ENCODE measurements at regions of chr19 and their contacts with region 1.

Region 1: DNA sequence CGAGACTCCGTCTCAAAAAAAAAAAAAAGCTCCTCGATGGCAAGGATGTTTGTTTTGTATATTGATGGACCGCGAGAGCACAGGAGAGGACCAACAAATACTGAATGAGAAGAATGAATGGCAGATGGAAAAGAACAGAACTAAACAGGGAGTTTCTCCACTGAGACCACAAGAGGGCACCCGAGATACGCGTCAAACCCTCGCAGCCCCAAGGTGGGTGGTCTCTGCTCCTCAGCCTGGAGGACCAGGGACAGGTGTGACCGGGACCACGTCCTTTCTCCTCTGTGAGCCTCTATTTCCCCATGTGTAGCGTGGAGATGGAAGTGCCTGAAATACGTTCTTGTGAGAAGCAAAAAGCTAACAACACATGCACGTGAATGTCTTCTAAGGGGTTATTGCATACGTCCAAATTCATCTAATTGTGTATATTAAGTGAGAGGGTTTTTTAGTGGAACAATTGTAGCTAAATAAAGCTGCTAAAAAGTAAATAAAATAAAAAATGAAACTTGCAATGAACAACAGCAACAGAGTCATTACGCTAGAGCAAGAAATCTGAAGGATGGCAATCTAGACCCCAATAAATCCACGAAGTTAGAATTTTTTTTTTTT is 8.3 kb upstream of the CDC42EP5 start:
- DNase-seq: peak; percentile 66
- CTCF ChIP-seq: peak; percentile 78

Region 2: DNA sequence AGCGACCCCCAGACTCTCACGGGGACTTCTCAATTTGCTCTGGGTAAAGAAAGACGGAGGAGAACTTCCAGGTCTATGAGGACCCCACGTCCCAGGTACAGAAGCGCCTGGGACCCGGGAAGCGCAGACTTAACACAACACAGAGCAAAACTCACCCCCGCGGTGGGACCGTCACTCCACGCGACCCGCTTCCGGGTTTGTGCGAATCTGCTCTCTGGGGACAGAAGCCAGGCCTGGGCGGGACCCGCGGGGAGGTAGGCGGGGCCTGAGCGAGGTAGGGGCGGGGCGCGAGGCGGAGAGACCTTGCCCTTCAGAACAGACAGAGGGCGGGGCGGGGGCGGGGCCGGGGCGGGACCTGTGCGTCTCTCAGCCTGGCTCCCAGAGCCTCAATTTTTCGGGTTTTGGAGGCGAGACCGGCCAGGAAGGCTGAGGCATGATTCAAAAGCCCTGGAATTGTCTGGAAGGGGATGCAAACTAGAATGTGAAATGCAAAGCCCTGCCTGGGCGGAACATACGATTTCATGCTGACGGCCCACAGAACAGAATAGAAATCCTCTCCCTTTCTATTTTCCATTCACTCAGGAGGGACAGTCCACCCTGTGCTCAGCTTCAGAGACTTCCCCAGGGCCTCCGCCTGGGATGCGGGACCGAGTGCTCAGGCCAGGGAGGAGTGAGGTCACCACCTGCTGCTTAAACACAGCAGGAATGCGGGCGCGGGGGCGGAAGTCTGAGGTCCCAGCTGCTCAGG is 1538.9 kb before region 1 on chr19:
- in situ Hi-C with region 1: no loop called
- DNase-seq: peak; percentile 94
- CTCF ChIP-seq: no peak

Region 3: DNA sequence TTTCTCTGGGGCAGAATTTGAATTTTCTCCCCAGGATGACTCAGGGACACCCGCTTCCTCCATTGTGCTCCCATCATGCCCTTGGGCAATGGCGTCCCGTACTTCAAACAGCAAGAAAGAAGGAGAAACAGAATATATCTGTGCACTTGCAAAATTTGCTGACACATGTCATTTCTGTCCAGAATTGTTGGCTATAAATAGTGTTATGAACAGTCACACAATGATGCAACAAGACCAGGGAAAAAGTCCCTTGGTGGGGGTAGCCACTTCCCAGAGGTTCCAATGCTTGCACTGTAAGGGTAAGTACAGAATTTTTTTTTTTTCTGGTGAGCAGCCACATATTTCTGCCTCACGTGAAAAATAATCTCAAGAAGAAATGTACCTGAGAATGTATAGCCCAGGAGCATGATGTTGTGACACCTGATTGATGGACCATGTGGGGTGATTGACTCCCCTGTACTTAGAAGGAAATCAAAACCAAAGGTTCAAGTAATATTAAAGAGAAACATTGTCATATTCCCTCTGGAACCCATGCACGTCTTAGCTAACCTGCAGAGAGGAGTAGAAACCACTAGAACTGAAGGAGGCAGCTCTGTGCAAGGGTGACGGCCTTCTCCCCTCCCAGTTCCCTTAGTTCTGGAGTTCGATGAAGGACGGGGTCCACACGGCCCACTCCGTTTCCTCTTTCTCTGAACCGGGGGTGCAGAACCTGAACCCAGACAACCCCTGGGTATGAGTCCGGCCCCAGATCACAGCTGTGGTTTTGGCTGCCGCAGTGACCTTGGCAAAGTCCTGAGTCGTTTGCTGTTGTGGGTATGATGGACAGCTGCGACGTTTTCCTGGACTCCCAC is 107.4 kb before region 1 on chr19:
- in situ Hi-C with region 1: no loop called
- DNase-seq: peak; percentile 46
- CTCF ChIP-seq: no peak

Region 4: GRCh38 chr19:54653181-54653809 is 171.9 kb after region 1 on chr19:
- in situ Hi-C with region 1: loop called (anchors 10 kb)
- DNase-seq: peak; percentile 64
- CTCF ChIP-seq: peak; percentile 58

Region 5: DNA sequence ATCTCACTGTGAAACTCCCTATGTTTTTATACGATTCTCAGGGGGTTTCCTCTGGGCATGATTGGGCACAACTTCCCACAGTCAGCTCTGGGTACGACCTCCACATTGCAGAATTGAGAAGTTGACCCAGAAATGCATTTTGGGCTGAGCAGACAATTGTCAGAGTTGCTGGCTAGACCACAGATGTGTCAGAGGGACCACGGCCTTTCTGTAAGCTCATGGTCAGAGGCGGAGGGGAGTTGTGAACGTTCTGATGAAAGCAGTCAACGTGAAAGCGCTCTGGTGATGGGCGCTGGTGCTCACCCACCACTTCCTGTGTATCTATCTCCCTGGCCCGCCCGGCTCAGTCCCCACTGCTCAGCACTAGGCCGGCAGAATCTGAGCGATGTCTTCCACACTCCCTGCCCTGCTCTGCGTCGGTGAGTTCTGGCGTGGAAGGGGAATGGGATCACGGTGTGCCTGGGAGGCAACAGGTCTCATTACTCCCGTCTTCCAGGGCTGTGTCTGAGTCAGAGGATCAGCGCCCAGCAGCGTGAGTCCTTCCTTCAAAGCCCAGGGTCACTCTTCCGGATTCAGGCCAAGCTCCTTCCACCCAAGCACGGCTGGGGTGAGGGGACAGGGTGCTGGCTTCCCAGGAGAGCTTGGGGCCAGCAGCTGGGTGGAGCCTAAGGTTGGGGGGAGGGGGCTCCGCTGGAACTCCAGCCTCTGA is 424.5 kb after region 1 on chr19 and contains the start of gene NCR1:
- in situ Hi-C with region 1: loop called (anchors 25 kb)
- DNase-seq: no peak
- CTCF ChIP-seq: no peak